Activated CD8-positive, alpha-beta T cell treated with anti-CD3 and anti-CD28 coated beads for 36 hours (primary cell): ENCODE measurements at regions of chr17 and their contacts with region 1.

Region 1: DNA sequence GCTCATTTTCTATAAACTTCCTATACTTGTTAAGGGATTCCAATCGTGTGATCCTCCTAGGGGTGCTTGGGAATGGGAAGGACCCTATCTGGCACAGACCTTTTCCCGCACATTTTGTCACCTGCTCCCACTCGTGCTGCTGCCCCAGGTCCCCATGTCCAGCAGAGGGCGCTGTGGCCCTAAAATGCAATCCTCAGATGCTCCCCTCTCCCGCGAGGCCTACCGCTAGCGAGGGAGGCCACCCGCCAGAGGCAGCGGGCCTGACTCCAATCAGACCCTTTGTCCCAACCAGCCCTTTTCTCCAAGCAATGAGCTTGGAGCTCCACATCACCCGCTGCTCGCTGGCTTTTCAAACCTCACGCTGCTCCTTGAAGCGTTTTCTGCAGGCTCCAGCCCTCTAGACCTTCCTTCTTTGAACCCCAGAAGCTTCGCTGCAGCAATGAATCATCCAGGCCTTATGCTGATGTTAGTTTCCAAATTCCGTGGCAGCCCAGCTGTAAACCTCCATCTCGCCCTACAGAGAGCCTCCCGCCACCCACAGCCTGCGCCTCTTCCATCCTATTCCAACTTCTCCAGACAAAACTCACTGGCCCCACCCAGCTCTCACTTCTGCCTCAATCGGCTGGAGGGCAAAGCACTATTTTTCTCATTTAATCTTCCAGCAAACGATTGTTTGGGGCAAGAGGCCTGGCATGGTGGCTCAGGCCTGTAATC is 23.6 kb upstream of the FZD2 start:
- DNase-seq: peak; percentile 94
- ATAC-seq: peak; percentile 96
- H3K4me3 Mint-ChIP-seq: no peak overlapping the region
- H3K27ac Mint-ChIP-seq: peak overlapping the region; percentile 30
- H3K4me1 Mint-ChIP-seq: peaks cover 8% of the 10 kb centered on the region
- H3K27me3 Mint-ChIP-seq: peaks cover 2% of the 10 kb centered on the region
- CTCF ChIP-seq: peak; percentile 97

Region 2: DNA sequence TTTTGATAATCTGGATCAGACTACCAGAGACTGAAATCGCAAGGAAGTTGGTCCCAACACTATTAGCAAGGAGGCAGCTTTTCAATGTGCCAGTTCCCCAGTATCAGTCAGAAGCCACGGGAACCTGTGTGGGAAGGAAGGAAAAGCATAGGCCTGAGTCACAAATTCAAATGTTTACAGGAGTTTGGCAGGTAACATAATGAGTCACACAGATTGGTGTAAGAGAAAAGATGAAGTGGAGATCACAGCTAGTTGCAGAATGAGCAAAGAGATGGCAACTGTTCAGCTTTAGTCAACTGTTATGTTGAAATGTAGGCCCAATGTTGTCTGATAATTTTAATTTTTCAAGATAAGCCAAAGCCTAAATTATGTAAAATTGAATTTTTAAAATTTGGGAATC is 116.1 kb before region 1 on chr17:
- CTCF ChIA-PET with region 1: no interaction called
- POLR2A ChIA-PET with region 1: no interaction called
- intact Hi-C with region 1: no loop called
- DNase-seq: peak; percentile 7
- ATAC-seq: peak; percentile 47
- H3K4me3 Mint-ChIP-seq: no peak overlapping the region
- H3K27ac Mint-ChIP-seq: peak overlapping the region; percentile 74
- H3K4me1 Mint-ChIP-seq: peaks cover 9% of the 10 kb centered on the region
- H3K27me3 Mint-ChIP-seq: no peaks in the 10 kb centered on the region
- CTCF ChIP-seq: no peak

Region 3: DNA sequence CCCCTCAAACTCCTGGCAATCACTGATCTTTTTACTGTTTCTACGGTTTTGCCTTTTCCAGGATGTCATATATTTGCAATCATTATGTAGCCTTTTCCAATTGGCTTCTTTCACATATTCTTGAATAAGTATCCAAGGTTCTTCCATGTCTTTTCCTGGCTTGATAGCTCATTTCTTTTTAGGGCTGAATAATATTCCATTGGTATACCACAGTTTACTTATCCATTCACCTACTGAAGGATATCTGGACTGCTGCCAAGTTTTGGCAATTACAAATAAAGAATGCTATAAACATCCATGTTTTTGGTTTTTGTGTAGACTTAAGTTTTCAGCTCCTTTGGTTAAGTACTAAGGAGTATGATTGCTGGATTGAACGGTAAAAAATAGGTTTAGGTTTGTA is 46.5 kb before region 1 on chr17:
- CTCF ChIA-PET with region 1: no interaction called
- POLR2A ChIA-PET with region 1: no interaction called
- intact Hi-C with region 1: no loop called
- DNase-seq: no peak
- ATAC-seq: no peak
- H3K4me3 Mint-ChIP-seq: no peak overlapping the region
- H3K27ac Mint-ChIP-seq: no peak overlapping the region
- H3K4me1 Mint-ChIP-seq: peaks cover 17% of the 10 kb centered on the region
- H3K27me3 Mint-ChIP-seq: no peaks in the 10 kb centered on the region
- CTCF ChIP-seq: no peak

Region 4: DNA sequence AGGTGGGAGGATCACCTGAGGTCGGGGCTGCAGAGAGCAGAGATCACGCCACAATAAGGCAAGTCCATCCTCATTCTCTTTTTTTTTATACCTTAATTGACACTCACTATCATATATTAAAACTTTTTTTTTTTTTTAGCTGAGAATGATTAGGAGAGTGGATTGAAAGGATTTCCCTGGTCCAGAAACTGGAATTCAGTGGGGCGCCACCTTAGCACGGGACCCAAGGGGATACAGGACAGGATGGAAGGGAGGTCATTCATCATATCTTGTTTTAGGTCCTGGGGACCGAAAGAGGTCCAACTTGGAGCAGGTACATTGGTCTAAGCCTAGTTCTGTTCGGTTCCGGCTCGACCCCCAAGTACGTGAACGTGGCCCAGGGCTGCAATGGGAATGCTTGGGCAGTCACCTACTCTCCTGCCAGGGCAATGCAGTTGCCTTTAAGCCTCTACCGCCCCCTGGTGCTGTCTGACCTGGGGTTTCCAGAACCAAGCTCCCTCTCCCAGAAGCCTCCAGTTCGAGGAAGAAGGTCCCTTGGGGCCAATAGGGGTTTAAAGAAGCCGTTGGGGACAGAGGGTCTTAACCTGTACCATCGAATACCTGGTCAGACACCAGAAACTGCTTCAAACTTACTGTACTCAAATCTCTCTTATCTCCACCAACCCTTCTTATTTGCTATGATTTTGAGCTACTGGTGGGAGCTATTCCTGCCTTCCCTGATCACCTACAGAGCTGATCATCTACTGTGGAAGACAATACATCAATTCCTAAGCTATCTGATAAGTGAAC is 10.6 kb before region 1 on chr17:
- CTCF ChIA-PET with region 1: interaction called, 18 read pairs
- POLR2A ChIA-PET with region 1: no interaction called
- intact Hi-C with region 1: no loop called
- DNase-seq: peak; percentile 87
- ATAC-seq: peak; percentile 89
- H3K4me3 Mint-ChIP-seq: no peak overlapping the region
- H3K27ac Mint-ChIP-seq: no peak overlapping the region
- H3K4me1 Mint-ChIP-seq: no peaks in the 10 kb centered on the region
- H3K27me3 Mint-ChIP-seq: peaks cover 9% of the 10 kb centered on the region
- CTCF ChIP-seq: peak; percentile 50

Region 5: DNA sequence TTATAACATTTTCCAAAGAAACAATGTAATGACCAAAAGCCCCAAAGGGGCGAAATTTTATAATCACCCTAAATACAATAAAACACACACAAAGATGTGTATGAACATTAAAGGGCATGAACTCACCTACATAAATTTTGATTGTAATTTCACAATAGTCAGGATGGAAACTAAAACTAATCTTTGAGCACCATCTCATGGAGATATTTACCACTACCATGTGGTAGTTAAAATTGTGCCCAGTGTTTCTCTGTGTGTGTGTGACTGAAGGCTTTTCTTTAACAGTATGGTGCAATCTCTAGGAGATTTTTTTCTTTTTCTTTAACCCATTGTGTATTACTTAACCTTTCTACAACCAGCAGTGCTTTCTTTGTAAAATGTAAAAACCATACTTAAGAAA is 102.9 kb after region 1 on chr17:
- CTCF ChIA-PET with region 1: interaction called, 16 read pairs
- POLR2A ChIA-PET with region 1: no interaction called
- intact Hi-C with region 1: loop called (anchors 5 kb)
- DNase-seq: no peak
- ATAC-seq: no peak
- H3K4me3 Mint-ChIP-seq: no peak overlapping the region
- H3K27ac Mint-ChIP-seq: no peak overlapping the region
- H3K4me1 Mint-ChIP-seq: no peaks in the 10 kb centered on the region
- H3K27me3 Mint-ChIP-seq: peaks cover 5% of the 10 kb centered on the region
- CTCF ChIP-seq: no peak

Region 6: DNA sequence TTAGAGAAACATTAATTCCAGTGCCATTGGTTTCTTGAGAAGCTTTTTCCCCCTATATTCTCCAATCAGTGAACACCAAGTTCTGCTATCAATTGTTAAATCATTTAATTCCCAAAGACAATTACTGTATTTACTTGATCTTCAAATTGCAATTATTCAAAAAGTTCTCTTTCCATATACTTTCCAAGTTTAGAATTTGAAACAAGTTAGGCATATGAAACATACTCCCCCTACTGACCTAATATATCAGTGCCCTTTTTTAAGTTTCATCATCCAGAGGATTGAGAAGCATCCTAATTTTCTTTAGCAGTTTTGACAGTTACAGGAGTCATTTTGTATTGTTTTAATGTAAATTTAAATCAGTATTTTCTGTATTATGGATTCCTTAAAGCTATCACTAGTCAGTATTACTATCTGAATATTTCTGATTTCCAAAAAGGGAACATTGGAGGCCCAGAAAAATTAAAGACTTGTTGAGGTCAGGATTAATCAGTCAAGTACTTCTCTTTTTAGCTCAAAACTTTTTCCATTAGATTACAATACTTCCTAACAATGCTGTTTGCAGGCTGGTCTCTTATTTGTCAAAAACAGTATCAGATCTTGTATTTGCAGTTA is 138.9 kb after region 1 on chr17:
- CTCF ChIA-PET with region 1: interaction called, 30 read pairs
- POLR2A ChIA-PET with region 1: no interaction called
- intact Hi-C with region 1: loop called (anchors 10 kb)
- DNase-seq: no peak
- ATAC-seq: no peak
- H3K4me3 Mint-ChIP-seq: no peak overlapping the region
- H3K27ac Mint-ChIP-seq: no peak overlapping the region
- H3K4me1 Mint-ChIP-seq: no peaks in the 10 kb centered on the region
- H3K27me3 Mint-ChIP-seq: no peaks in the 10 kb centered on the region
- CTCF ChIP-seq: peak; percentile 63